ENCODE measurements at regions of chr11 and their contacts with region 1.

Region 1: GRCh38 chr11:50075856-50076255 is 43.2 kb downstream of the OR4C45 start:
- DNase-seq: peak; percentile 46

Region 2: DNA sequence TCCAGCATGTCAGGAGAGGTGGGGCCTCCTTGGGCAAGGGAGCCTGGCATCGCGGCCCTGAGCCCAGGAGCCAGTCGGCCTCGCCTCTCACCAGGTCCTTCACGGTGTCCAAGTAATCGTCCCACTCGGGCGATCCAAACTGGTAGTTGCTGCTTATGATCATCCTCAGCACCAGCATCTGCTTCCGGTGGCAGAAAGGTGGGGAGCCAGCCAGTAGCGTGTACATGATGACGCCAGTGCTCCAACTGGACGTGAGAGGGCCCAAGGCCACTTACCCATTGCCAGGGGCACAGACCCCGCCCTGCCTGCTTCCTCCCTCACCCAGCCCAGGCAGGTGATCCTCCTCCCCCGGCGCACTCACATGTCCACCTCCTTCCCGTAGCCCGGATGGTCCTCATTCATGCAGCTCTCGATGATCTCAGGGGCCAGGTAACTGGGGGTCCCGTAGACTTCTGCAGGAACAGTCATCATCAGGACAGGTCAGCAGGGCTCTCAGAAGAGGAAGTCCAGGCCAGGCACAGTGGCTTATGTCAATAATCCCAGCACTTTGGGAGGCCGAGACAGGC is 171.5 kb after region 1 on chr11:
- in situ Hi-C with region 1: loop called (anchors 25 kb)
- DNase-seq: no peak